Testis (tissue), 5 donors: ENCODE measurements at regions of chr22 and their contacts with region 1.

Region 1: DNA sequence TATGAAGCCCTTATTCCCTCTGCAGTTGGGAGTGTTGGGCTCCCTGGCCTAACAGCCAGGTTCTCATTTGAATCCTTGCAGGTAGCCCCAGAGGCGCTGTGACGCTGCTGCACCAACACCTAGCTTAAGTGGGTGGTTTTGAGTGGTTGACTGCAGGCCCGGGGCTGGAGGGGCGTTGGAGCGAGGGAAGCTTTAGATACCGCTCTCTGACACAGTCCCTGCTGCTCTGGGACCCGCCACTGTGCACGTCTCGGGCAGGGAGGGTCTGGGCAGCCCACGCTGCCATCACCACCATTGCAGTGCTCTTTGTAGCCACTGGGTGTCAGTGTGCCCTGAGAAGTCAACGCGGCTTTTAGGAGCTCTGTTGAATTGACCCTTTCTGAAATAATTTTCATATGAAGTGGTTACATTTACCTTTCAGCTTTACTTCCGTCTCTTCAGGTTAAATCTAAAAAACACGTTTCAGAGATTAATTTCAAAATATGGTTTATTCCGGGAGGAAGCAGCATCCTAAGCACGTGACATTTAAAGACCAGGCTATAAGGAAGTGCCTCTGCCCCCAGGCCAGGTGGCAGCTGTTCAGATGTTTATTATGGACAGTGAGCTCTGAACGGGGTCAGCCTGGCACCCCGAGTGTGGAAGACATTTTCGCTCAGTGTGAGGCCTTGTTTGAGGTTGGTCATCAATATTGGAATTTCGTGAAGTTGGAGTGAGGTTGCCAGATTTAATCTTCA is 30.9 kb upstream of the PARVB start:
- DNase-seq: peak; percentile 66
- H3K4me3 ChIP-seq: no peak overlapping the region
- H3K27ac ChIP-seq: no peak overlapping the region
- H3K4me1 ChIP-seq: no peaks in the 10 kb centered on the region
- H3K27me3 ChIP-seq: no peaks in the 10 kb centered on the region
- CTCF ChIP-seq: peak; percentile 86 to 92 (median 88)
- POLR2A ChIP-seq: no peak

Region 2: GRCh38 chr22:43910178-43910695 is 83.0 kb before region 1 on chr22:
- intact Hi-C with region 1: no loop called
- DNase-seq: no peak
- H3K4me3 ChIP-seq: no peak overlapping the region
- H3K27ac ChIP-seq: no peak overlapping the region
- H3K4me1 ChIP-seq: no peaks in the 10 kb centered on the region
- H3K27me3 ChIP-seq: no peaks in the 10 kb centered on the region
- CTCF ChIP-seq: no peak
- POLR2A ChIP-seq: no peak

Region 3: GRCh38 chr22:44080936-44081861 is 88.0 kb after region 1 on chr22:
- intact Hi-C with region 1: loop called (anchors 5 kb)
- DNase-seq: peak; percentile 91
- H3K4me3 ChIP-seq: no peak overlapping the region
- H3K27ac ChIP-seq: no peak overlapping the region
- H3K4me1 ChIP-seq: peaks cover 8% of the 10 kb centered on the region
- H3K27me3 ChIP-seq: no peaks in the 10 kb centered on the region
- CTCF ChIP-seq: peak; percentile 67 to 80 (median 74)
- POLR2A ChIP-seq: no peak

Region 4: DNA sequence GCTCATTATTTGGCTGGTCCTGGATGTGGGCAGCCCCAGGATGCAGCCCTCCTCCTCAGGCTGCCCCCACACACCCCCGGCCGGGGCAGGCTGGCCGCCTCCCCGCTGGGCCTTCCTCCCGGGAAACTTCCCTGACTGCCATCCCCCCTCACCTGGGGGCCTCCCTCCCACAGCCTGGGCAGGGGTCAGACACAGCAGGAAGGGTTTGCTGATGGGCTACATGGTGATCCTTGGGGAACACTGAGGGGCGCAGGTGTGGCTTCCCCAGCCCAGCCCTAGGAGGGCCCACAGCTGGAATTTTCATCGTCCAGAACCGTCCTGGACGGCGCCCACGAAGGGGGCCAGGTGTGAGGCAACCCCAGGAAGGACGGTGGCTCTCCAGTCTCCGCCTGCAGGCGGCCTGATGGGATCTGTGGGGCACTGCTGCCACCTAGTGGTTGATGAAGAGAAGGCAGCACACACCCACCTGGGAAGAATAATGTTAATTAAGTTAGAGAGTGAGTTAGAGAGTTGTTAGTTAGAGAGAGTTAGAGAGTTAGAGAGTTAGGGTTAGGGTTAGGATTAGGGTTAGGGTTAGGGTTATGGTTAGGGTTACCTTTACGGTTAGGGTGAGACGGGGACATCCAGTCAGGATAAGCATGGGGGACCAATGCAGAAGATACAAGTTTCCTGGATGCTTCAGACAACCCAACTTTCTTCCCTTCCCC is 632.9 kb after region 1 on chr22:
- intact Hi-C with region 1: loop called (anchors 5 kb)
- DNase-seq: peak; percentile 83
- H3K4me3 ChIP-seq: no peak overlapping the region
- H3K27ac ChIP-seq: no peak overlapping the region
- H3K4me1 ChIP-seq: no peaks in the 10 kb centered on the region
- H3K27me3 ChIP-seq: no peaks in the 10 kb centered on the region
- CTCF ChIP-seq: peak; percentile 99
- POLR2A ChIP-seq: no peak